GM12878 (cell line): ENCODE measurements at regions of chr1 and their contacts with region 1.

Region 1: DNA sequence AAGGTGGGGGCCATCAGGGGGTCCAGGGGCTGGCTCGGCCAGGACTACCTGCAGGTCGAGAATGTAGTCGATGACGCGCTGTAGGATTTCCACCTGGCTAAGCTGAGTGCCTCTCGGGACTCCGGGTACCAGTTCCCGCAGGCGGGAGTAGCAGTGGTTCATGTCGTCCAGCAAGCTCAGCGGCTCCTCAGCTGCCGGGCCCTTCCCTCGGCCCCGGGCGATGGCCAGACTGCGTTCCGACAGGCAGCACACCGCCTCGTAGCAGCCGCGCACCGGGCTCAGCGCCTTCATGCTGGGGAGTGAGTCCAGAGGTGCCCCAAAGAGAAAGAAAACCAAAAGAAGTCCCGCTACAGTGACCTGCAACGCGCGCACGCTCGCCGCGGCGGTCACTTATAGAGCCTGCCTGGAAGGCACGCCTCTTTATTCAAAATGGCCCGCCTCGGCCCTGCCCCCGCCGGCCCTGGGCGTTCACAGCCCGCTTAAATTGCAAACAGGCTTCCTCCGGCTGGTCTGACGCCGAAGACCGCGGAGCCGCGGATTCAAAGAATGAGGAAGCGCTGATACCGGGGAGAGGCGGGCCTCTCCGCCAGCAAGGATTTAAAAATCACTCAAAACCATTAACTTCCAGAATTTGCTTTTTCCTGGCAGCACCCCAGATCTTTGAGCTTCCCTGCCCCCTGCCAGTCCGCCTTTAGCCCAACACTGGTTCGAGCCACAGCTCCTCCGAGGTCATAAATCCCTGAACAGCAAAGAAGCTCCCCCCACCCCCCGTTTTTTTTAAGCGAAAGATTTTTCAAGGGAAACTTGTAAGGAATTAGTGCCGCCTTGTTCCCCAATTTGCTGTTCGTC is at the start of gene ID3:
- DNase-seq: peak; percentile 69
- ATAC-seq: peak; percentile 76
- H3K4me3 ChIP-seq: peak within 1 kb of the TSS; percentile 96
- H3K27ac ChIP-seq: peak within 1 kb of the TSS; percentile 90
- H3K4me1 ChIP-seq: peaks cover 46% of the 10 kb centered on the region
- H3K27me3 ChIP-seq: no peaks in the 10 kb centered on the region
- CTCF ChIP-seq: no peak
- EP300 ChIP-seq: no peak
- POLR2A ChIP-seq: peak; percentile 98
- RAD21 ChIP-seq: 0 out of 2 replicates have a peak, but pooled peaks have one; percentile 1
- polyA plus RNA-seq, gene ID3: 42.7 to 104 TPM

Region 2: GRCh38 chr1:22963044-22963677 is 596.2 kb before region 1 on chr1:
- CTCF ChIA-PET with region 1: no interaction called
- POLR2A ChIA-PET with region 1: no interaction called
- RAD21 ChIA-PET with region 1: no interaction called
- SMC1A ChIA-PET with region 1: no interaction called
- in situ Hi-C with region 1: no loop called
- intact Hi-C with region 1: no loop called
- DNase-seq: no peak
- ATAC-seq: no peak
- H3K4me3 ChIP-seq: no peak overlapping the region
- H3K27ac ChIP-seq: no peak overlapping the region
- H3K4me1 ChIP-seq: no peaks in the 10 kb centered on the region
- H3K27me3 ChIP-seq: peaks cover 0 to 1% of the 10 kb centered on the region in 2 experiments; a peak in 2 of 4 replicates
- CTCF ChIP-seq: no peak
- EP300 ChIP-seq: no peak
- POLR2A ChIP-seq: no peak
- RAD21 ChIP-seq: no peak

Region 3: GRCh38 chr1:23478896-23479665 is 80.3 kb before region 1 on chr1:
- CTCF ChIA-PET with region 1: no interaction called
- POLR2A ChIA-PET with region 1: no interaction called
- RAD21 ChIA-PET with region 1: no interaction called
- SMC1A ChIA-PET with region 1: no interaction called
- in situ Hi-C with region 1: no loop called
- intact Hi-C with region 1: no loop called
- DNase-seq: no peak
- ATAC-seq: no peak
- H3K4me3 ChIP-seq: no peak overlapping the region
- H3K27ac ChIP-seq: no peak overlapping the region
- H3K4me1 ChIP-seq: peaks cover 15% of the 10 kb centered on the region
- H3K27me3 ChIP-seq: peaks cover 6 to 9% of the 10 kb centered on the region in 2 experiments
- CTCF ChIP-seq: no peak
- EP300 ChIP-seq: no peak
- POLR2A ChIP-seq: no peak
- RAD21 ChIP-seq: no peak

Region 4: DNA sequence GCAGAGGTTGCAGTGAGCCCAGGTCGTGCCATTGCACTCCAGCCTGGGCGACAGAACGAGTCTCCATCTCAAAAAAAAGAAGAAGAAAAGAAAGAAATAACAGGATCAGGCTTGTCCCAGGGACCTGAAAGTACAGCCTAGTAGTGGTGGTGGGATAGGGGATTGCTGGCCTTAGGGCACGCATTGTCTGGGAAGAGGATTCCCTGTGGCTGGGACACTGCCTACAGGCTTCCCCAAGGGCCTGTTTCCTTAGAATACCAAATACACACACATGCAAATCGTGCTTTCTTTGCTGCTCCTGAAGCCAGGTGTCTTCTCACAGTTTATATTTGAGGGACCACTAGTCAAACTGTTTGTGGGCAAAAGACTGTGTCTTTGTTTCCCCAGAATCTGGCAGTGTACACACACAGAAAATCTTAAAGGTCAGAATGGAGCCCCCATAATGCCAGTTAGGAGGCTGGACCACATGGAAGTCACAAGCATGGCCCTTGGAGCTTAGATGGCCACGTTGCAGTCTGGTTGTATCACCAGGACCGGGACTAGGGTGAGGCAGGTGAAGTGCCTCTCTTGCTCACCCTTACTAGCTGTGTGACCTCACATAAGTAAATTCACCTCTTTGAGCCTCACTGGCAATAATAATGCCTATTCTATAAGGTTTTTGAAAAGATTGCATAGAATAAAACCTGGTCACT is 62.7 kb before region 1 on chr1:
- CTCF ChIA-PET with region 1: interaction called, 11 read pairs
- POLR2A ChIA-PET with region 1: no interaction called
- RAD21 ChIA-PET with region 1: interaction called, 9 read pairs
- SMC1A ChIA-PET with region 1: interaction called, 3 read pairs
- in situ Hi-C with region 1: no loop called
- intact Hi-C with region 1: no loop called
- DNase-seq: no peak
- ATAC-seq: peak; percentile 26; the same call in 2 of the 3 replicates
- H3K4me3 ChIP-seq: no peak overlapping the region
- H3K27ac ChIP-seq: no peak overlapping the region
- H3K4me1 ChIP-seq: no peaks in the 10 kb centered on the region
- H3K27me3 ChIP-seq: no peaks in the 10 kb centered on the region
- CTCF ChIP-seq: no peak
- EP300 ChIP-seq: no peak
- POLR2A ChIP-seq: no peak
- RAD21 ChIP-seq: no peak

Region 5: DNA sequence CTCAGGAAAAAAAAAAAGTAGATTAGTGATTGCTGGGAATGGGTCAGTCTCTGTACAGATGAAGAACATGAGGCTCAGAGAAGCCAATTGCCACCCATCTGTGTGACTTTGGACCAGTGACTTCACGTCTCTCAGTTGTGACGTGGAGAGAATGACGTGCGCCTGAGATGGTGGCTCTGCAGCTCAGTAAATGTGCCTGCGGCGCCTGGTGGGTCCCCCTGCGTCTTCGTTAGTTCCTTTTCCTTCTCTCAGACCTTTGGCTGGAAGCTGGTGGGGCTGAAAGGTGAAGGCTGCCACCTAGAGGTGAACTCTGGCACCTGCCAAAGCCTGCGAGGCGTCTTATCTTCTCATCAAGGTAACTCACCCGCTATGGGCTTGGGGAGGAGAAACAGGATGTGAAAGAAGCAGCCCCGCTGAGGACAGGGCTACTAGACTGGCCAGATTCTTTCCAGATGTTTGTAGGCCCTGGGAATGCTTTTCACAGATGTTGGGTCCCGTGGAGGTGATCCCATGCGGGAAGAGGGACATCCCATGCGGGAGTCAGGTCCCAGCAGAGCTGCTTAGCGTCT is 19.6 kb before region 1 on chr1:
- CTCF ChIA-PET with region 1: interaction called, 24 read pairs
- POLR2A ChIA-PET with region 1: interaction called, 5 read pairs
- RAD21 ChIA-PET with region 1: interaction called, 12 read pairs
- SMC1A ChIA-PET with region 1: interaction called, 19 read pairs
- in situ Hi-C with region 1: no loop called
- intact Hi-C with region 1: no loop called
- DNase-seq: peak; percentile 92
- ATAC-seq: peak; percentile 93
- H3K4me3 ChIP-seq: no peak overlapping the region
- H3K27ac ChIP-seq: no peak overlapping the region
- H3K4me1 ChIP-seq: peaks cover 7% of the 10 kb centered on the region
- H3K27me3 ChIP-seq: no peaks in the 10 kb centered on the region
- CTCF ChIP-seq: peak; percentile 96 to 99 (median 99); a peak in 5 of 6 replicates
- EP300 ChIP-seq: peak in 1 of 2 experiments; percentile 33; a peak in 1 of 4 replicates
- POLR2A ChIP-seq: no peak
- RAD21 ChIP-seq: peak; percentile 98

Region 6: GRCh38 chr1:23577056-23578004 is 18.0 kb after region 1 on chr1:
- CTCF ChIA-PET with region 1: interaction called, 112 read pairs
- POLR2A ChIA-PET with region 1: interaction called, 188 read pairs
- RAD21 ChIA-PET with region 1: interaction called, 63 read pairs
- SMC1A ChIA-PET with region 1: interaction called, 216 read pairs
- in situ Hi-C with region 1: no loop called
- intact Hi-C with region 1: loop called (anchors 1 kb)
- DNase-seq: peak; percentile 92
- ATAC-seq: peak; percentile 80
- H3K4me3 ChIP-seq: peak overlapping the region; percentile 61; the same call in 1 of the 2 replicates
- H3K27ac ChIP-seq: peak overlapping the region; percentile 96
- H3K4me1 ChIP-seq: peaks cover 53% of the 10 kb centered on the region
- H3K27me3 ChIP-seq: no peaks in the 10 kb centered on the region
- CTCF ChIP-seq: no peak
- EP300 ChIP-seq: peak; percentile 75 to 85; a peak in 3 of 4 replicates
- POLR2A ChIP-seq: 0 out of 2 replicates have a peak, but pooled peaks have one; percentile 20
- RAD21 ChIP-seq: peak; percentile 31; the same call in 1 of the 2 replicates

Region 7: GRCh38 chr1:23598424-23598823 is 39.1 kb after region 1 on chr1:
- CTCF ChIA-PET with region 1: interaction called, 108 read pairs
- POLR2A ChIA-PET with region 1: interaction called, 206 read pairs
- RAD21 ChIA-PET with region 1: interaction called, 153 read pairs
- SMC1A ChIA-PET with region 1: interaction called, 419 read pairs
- in situ Hi-C with region 1: no loop called
- intact Hi-C with region 1: loop called (anchors 2 kb)
- DNase-seq: no peak
- ATAC-seq: no peak
- H3K4me3 ChIP-seq: no peak overlapping the region
- H3K27ac ChIP-seq: no peak overlapping the region
- H3K4me1 ChIP-seq: peaks cover 79% of the 10 kb centered on the region
- H3K27me3 ChIP-seq: no peaks in the 10 kb centered on the region
- CTCF ChIP-seq: no peak
- EP300 ChIP-seq: no peak
- POLR2A ChIP-seq: no peak
- RAD21 ChIP-seq: no peak

Region 8: GRCh38 chr1:23619299-23620188 is 60.2 kb after region 1 on chr1:
- CTCF ChIA-PET with region 1: interaction called, 959 read pairs
- POLR2A ChIA-PET with region 1: interaction called, 19 read pairs
- RAD21 ChIA-PET with region 1: interaction called, 13 read pairs
- SMC1A ChIA-PET with region 1: interaction called, 8 read pairs
- in situ Hi-C with region 1: no loop called
- intact Hi-C with region 1: no loop called
- DNase-seq: no peak
- ATAC-seq: peak; percentile 82
- H3K4me3 ChIP-seq: peak overlapping the region; percentile 64
- H3K27ac ChIP-seq: peak overlapping the region; percentile 51
- H3K4me1 ChIP-seq: peaks cover 36% of the 10 kb centered on the region
- H3K27me3 ChIP-seq: no peaks in the 10 kb centered on the region
- CTCF ChIP-seq: no peak
- EP300 ChIP-seq: peak; percentile 50 to 67; a peak in 1 of 4 replicates
- POLR2A ChIP-seq: peak; percentile 64
- RAD21 ChIP-seq: no peak